ENCODE measurements at regions of chr21 and their contacts with region 1.

Region 1: GRCh38 chr21:35508139-35508888 is 459.2 kb upstream of the RUNX1 start:
- DNase-seq: peak; percentile 39
- ATAC-seq: peak; percentile 60
- H3K4me3 Mint-ChIP-seq: no peak overlapping the region
- H3K27ac Mint-ChIP-seq: 0 out of 2 replicates have a peak overlapping the region, but pooled peaks have one; percentile 35
- H3K4me1 Mint-ChIP-seq: peaks cover 76% of the 10 kb centered on the region
- H3K27me3 Mint-ChIP-seq: no peaks in the 10 kb centered on the region
- CTCF ChIP-seq: no peak

Region 2: GRCh38 chr21:35423709-35424108 is 84.6 kb before region 1 on chr21:
- CTCF ChIA-PET with region 1: no interaction called
- POLR2A ChIA-PET with region 1: no interaction called
- DNase-seq: no peak
- ATAC-seq: no peak
- H3K4me3 Mint-ChIP-seq: no peak overlapping the region
- H3K27ac Mint-ChIP-seq: no peak overlapping the region
- H3K4me1 Mint-ChIP-seq: peaks cover 18% of the 10 kb centered on the region
- H3K27me3 Mint-ChIP-seq: no peaks in the 10 kb centered on the region; the same call in none of the 2 replicates
- CTCF ChIP-seq: no peak

Region 3: GRCh38 chr21:35436899-35437298 is 71.4 kb before region 1 on chr21:
- CTCF ChIA-PET with region 1: interaction called, 10 read pairs
- POLR2A ChIA-PET with region 1: interaction called, 5 read pairs
- DNase-seq: no peak
- ATAC-seq: no peak
- H3K4me3 Mint-ChIP-seq: no peak overlapping the region
- H3K27ac Mint-ChIP-seq: no peak overlapping the region
- H3K4me1 Mint-ChIP-seq: peaks cover 13% of the 10 kb centered on the region
- H3K27me3 Mint-ChIP-seq: peaks cover 5% of the 10 kb centered on the region; the same call in 1 of the 2 replicates
- CTCF ChIP-seq: no peak

Measured in WTC11 (cell line).